ENCODE measurements at regions of chr12 and their contacts with region 1.

Region 1: DNA sequence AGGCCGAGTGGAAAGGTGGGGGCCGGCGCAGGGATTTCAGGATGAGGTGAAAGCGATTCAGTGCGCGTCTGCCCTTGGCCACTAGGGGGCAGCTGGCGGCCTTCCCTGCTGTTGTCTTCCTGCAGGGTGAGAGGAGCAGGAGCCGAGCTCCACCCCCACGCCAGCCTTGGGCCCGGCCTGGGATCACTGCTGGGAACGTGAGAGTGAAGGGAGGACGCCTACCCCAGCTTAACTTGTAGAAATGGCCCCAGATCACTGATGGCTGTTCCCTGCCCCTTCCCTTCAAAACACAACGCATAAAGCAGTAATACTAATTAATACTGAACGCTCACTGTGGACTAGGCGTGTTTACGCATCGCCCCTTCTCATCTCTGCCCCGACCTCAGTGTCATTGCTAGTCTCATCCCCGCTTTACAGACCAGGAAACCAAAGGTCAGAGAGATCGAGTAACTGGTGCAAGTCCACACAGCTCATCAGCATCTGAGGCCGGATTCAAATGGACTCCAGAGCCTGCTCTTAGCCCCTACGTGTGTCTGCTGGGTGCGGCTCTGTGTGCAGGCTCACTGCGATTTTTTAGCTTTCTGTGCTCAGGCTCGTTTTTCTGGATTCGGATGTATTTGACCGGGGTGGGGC is 24.3 kb downstream of the MVK start:
- DNase-seq: peak; percentile 83 to 89
- H3K4me3 ChIP-seq: peak overlapping the region in 1 of 3 donors; percentile 38
- H3K27ac ChIP-seq: no peak overlapping the region
- H3K4me1 ChIP-seq: peaks cover 0 to 4% of the 10 kb centered on the region in 2 donors
- H3K27me3 ChIP-seq: no peaks in the 10 kb centered on the region
- CTCF ChIP-seq: peak; percentile 89 to 97 (median 96)
- POLR2A ChIP-seq: no peak

Region 2: DNA sequence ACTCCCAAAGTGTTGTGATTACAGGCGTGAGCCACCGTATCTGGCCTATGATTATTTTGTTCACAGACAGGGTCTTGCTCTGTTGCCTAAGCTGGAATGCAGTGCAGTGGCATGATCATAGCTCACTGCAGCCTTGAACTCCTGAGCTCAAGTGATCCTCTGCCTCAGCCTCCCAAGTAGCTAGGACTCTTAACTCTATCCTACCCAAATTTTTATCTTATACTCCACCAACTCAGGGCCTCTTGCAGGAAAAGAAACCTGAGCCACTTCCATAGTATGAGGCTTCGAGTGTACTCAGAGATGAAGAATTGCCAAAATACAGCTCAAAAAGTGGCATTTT is 25.4 kb before region 1 on chr12:
- intact Hi-C with region 1: no loop called
- DNase-seq: no peak
- H3K4me3 ChIP-seq: peak overlapping the region in 2 of 3 donors; percentile 73 to 76
- H3K27ac ChIP-seq: peak overlapping the region in 1 of 2 donors; percentile 93
- H3K4me1 ChIP-seq: peaks cover 0 to 16% of the 10 kb centered on the region in 2 donors
- H3K27me3 ChIP-seq: no peaks in the 10 kb centered on the region
- CTCF ChIP-seq: no peak
- POLR2A ChIP-seq: no peak

Region 3: GRCh38 chr12:109582658-109583057 is 15.3 kb before region 1 on chr12:
- intact Hi-C with region 1: no loop called
- DNase-seq: peak in 1 of 2 donors; percentile 39
- H3K4me3 ChIP-seq: no peak overlapping the region
- H3K27ac ChIP-seq: peak overlapping the region; percentile 76 to 79
- H3K4me1 ChIP-seq: no peaks in the 10 kb centered on the region
- H3K27me3 ChIP-seq: no peaks in the 10 kb centered on the region
- CTCF ChIP-seq: no peak
- POLR2A ChIP-seq: no peak

Region 4: GRCh38 chr12:109680264-109681005 is 82.5 kb after region 1 on chr12:
- intact Hi-C with region 1: no loop called
- DNase-seq: peak in 1 of 2 donors; percentile 64
- H3K4me3 ChIP-seq: no peak overlapping the region
- H3K27ac ChIP-seq: peak overlapping the region in 1 of 2 donors; percentile 37
- H3K4me1 ChIP-seq: no peaks in the 10 kb centered on the region
- H3K27me3 ChIP-seq: no peaks in the 10 kb centered on the region
- CTCF ChIP-seq: no peak
- POLR2A ChIP-seq: no peak

Region 5: GRCh38 chr12:109775172-109775881 is 177.4 kb after region 1 on chr12:
- intact Hi-C with region 1: loop called (anchors 5 kb)
- DNase-seq: peak; percentile 58 to 79
- H3K4me3 ChIP-seq: no peak overlapping the region
- H3K27ac ChIP-seq: no peak overlapping the region
- H3K4me1 ChIP-seq: no peaks in the 10 kb centered on the region
- H3K27me3 ChIP-seq: no peaks in the 10 kb centered on the region
- CTCF ChIP-seq: peak; percentile 43 to 86 (median 77)
- POLR2A ChIP-seq: no peak

Region 6: DNA sequence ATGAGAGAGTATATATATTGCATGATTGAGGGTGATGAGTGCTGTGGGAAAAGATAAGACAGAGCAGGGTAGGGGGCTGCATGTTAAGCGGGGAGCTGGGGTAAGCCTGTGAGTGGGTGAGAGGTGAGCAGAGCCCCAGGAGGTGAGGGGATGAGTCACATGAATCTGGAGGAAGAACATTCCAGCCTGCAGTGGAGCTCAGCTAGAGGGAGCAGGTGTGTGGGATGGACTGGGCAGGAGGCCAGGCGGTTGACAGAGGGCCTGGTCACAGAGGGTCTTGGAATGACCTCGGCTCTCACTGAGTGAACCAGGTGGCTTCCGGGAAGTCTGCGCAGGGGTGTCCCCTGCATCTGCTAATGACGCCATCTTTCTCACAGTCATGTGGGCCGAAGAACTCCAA is 353.8 kb after region 1 on chr12:
- intact Hi-C with region 1: no loop called
- DNase-seq: no peak
- H3K4me3 ChIP-seq: no peak overlapping the region
- H3K27ac ChIP-seq: no peak overlapping the region
- H3K4me1 ChIP-seq: no peaks in the 10 kb centered on the region
- H3K27me3 ChIP-seq: no peaks in the 10 kb centered on the region
- CTCF ChIP-seq: no peak
- POLR2A ChIP-seq: no peak

Measured in breast epithelium (tissue), 4 donors.